ENCODE measurements at regions of chr3 and their contacts with region 1.

Region 1: DNA sequence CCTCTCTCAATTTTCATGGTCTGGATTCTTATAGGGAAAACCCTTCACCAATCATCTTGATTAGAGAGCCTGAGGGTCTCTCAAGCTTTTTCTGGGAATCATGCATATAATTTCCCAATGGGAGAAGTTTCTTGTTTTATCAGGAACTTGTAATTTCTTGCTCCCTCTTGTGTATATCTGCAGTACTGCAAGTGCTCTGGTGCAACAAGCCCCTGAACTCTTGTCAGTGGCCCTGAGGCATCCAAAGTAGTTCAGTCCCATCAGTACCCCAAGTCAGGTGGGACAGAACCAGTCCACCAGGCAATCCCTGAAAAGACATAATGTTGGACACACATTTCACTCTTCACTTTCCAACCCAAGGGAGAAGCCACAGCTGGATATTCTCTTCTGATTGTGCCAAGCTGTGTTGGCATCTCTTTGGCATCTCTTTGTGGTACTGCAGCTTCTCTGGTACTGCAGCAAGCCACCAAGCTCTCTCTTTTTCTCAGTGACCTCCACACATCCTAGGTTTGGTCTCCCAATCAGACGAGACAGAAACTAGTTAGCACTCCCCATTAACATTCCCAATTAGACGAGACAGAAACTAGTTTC is 214.5 kb downstream of the ZIC4 start:
- DNase-seq: peak; percentile 64
- ATAC-seq: peak; percentile 83
- H3K4me3 ChIP-seq: no peak overlapping the region
- H3K27ac ChIP-seq: no peak overlapping the region
- H3K4me1 ChIP-seq: peaks cover 18% of the 10 kb centered on the region
- H3K27me3 ChIP-seq: no peaks in the 10 kb centered on the region
- CTCF ChIP-seq: peak; percentile 83
- EP300 ChIP-seq: no peak
- POLR2A ChIP-seq: no peak
- RAD21 ChIP-seq: peak; percentile 80

Region 2: GRCh38 chr3:146817704-146818103 is 374.2 kb before region 1 on chr3:
- CTCF ChIA-PET with region 1: no interaction called
- POLR2A ChIA-PET with region 1: no interaction called
- in situ Hi-C with region 1: no loop called
- intact Hi-C with region 1: loop called (anchors 5 kb)
- DNase-seq: no peak
- ATAC-seq: no peak
- H3K4me3 ChIP-seq: no peak overlapping the region
- H3K27ac ChIP-seq: no peak overlapping the region
- H3K4me1 ChIP-seq: no peaks in the 10 kb centered on the region
- H3K27me3 ChIP-seq: no peaks in the 10 kb centered on the region
- CTCF ChIP-seq: peak; percentile 18; the same call in 1 of the 2 replicates
- EP300 ChIP-seq: no peak
- POLR2A ChIP-seq: no peak
- RAD21 ChIP-seq: no peak

Region 3: DNA sequence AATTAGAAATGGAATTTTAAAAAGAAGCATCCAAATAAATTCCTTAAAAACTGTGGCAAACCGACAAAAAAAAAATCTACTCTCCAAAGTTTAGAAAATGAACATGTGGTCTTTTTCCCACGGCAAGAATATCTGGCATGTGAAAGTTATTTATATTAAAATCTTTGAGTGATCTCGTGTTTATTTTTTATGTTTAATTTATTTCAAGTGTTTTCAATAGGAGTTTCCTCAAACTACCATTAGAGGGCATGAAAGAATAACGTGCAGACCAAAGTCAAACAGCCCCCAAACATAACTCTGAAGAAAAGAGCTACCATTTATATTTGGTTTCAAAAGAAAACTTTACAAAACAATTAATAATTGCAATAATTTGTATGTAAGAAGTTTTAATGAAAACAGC is 71.9 kb before region 1 on chr3:
- CTCF ChIA-PET with region 1: interaction called, 32 read pairs
- POLR2A ChIA-PET with region 1: no interaction called
- in situ Hi-C with region 1: no loop called
- intact Hi-C with region 1: loop called (anchors 1 kb)
- DNase-seq: peak; percentile 16
- ATAC-seq: no peak
- H3K4me3 ChIP-seq: no peak overlapping the region
- H3K27ac ChIP-seq: no peak overlapping the region
- H3K4me1 ChIP-seq: no peaks in the 10 kb centered on the region
- H3K27me3 ChIP-seq: no peaks in the 10 kb centered on the region
- CTCF ChIP-seq: peak; percentile 58
- EP300 ChIP-seq: no peak
- POLR2A ChIP-seq: no peak
- RAD21 ChIP-seq: peak; percentile 55